SK-N-SH (cell line): ENCODE measurements at regions of chr14 and their contacts with region 1.

Region 1: DNA sequence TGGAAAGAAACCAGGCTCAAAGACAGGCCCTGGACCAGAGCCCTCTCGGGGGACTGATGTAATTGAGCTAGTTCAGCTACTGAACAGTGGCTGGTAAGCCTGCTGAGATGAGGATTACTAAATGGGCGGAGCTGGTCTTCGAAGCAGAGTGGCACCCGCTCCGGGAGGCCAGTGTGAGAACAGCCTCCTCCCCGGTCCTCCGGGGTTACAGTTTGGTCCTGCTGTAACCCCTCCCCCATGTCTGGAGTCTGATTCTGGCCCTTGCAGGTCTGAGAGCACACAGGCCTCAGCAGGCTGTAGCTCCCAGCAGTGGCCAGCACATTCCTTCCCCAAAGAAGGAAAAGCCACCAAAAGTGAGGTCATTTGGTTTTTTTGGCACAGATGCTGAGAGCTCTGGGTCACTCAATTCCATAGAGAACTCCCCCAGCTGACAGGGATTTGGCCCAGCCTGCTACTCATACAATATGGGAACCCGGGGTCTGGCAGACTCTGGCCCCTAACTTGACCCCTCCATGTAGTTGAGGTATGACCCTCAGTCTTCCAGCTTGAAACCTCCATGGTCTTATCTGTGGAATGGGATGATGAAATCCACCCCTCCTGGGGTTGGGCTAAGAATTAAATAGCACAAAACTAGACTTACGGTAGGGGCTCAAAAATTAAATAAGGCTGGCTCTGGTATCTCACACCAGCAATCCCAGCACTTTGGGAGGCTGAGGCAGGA is 39.0 kb downstream of the ACTN1 start:
- DNase-seq: peak; percentile 51
- H3K4me3 ChIP-seq: no peak overlapping the region
- H3K27ac ChIP-seq: peak overlapping the region; percentile 92 to 99
- H3K4me1 ChIP-seq: peaks cover 71 to 90% of the 10 kb centered on the region in 2 experiments
- H3K27me3 ChIP-seq: no peaks in the 10 kb centered on the region
- CTCF ChIP-seq: no peak
- EP300 ChIP-seq: peak; percentile 35 to 73; a peak in 2 of 4 replicates
- RAD21 ChIP-seq: no peak

Region 2: DNA sequence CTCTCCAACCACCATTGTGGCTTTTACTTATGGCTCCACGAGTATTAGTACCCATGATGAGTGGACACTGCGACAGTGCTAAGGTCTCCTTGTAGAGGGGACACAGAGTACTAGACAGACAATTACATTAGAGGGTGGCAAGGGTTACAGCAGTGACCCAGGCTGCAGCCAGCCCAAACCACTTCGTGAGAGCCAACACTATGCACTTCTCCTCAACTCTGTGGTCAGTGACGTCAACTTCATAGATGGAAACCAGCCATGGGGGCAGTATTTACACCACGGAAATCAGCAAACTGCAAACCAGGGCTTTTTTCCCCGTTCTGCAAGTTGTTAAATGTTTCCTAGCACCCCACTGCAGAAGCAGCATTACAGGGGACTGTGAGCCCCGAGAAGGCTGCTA is 85.6 kb before region 1 on chr14:
- CTCF ChIA-PET with region 1: no interaction called
- POLR2A ChIA-PET with region 1: no interaction called
- DNase-seq: no peak
- H3K4me3 ChIP-seq: no peak overlapping the region
- H3K27ac ChIP-seq: no peak overlapping the region
- H3K4me1 ChIP-seq: peaks cover 0 to 12% of the 10 kb centered on the region in 2 experiments; a peak in 1 of 4 replicates
- H3K27me3 ChIP-seq: no peaks in the 10 kb centered on the region
- CTCF ChIP-seq: no peak
- EP300 ChIP-seq: no peak
- RAD21 ChIP-seq: no peak

Region 3: DNA sequence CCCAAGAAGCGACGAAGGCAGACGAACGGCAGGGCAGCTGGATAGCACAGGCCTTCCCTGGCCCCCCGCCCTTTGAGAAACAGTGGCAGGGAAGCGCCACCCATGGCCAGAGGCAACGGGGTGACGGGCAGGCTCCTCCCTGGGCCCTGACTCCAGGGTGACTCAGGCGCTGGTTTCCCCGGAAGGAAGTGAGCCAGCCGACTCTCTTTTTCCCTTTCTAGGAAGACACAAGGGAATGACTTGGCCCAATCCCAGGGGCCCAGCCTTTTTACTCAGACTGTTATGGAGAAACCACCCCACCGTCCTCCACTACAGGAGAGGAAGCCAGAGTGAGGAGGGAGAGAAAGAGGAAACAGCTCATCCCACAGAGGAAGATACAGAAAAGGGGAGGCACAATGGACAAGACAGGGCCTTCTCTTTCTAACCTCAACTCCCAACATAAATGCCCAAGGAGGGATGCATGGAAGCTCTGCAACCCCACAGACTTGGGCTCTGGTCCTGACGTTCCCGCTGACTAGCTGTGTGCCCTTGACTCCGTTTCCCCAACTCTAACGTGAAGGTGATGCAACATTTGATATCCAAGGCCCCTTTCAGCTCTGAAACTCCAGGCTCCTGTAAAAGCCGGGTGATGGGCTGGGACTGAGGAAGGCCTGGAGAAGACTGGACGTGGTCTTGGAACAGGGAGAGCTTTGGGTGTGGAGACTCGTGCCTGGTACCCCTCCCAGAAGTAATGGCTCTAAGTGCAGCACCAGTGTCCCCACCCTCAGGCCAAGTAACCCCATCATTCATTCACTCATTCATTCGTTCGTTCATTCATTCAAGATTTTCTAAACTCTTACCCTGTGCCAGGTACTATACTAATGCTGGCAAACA is 11.2 kb after region 1 on chr14:
- CTCF ChIA-PET with region 1: interaction called, 29 read pairs
- POLR2A ChIA-PET with region 1: interaction called, 5 read pairs
- DNase-seq: peak; percentile 34
- H3K4me3 ChIP-seq: no peak overlapping the region
- H3K27ac ChIP-seq: peak overlapping the region; percentile 91 to 96
- H3K4me1 ChIP-seq: peaks cover 71 to 94% of the 10 kb centered on the region in 2 experiments
- H3K27me3 ChIP-seq: no peaks in the 10 kb centered on the region
- CTCF ChIP-seq: no peak
- EP300 ChIP-seq: peak in 1 of 2 experiments; percentile 84; a peak in 1 of 4 replicates
- RAD21 ChIP-seq: no peak

Region 4: GRCh38 chr14:69055999-69056788 is 116.1 kb after region 1 on chr14:
- CTCF ChIA-PET with region 1: interaction called, 18 read pairs
- POLR2A ChIA-PET with region 1: no interaction called
- DNase-seq: peak; percentile 69
- H3K4me3 ChIP-seq: no peak overlapping the region
- H3K27ac ChIP-seq: peak overlapping the region; percentile 13 to 89; a peak in 3 of 4 replicates
- H3K4me1 ChIP-seq: peaks cover 13 to 28% of the 10 kb centered on the region in 2 experiments; a peak in 3 of 4 replicates
- H3K27me3 ChIP-seq: no peaks in the 10 kb centered on the region
- CTCF ChIP-seq: no peak
- EP300 ChIP-seq: no peak
- RAD21 ChIP-seq: peak; percentile 70